ENCODE measurements at regions of chr15 and their contacts with region 1.

Region 1: DNA sequence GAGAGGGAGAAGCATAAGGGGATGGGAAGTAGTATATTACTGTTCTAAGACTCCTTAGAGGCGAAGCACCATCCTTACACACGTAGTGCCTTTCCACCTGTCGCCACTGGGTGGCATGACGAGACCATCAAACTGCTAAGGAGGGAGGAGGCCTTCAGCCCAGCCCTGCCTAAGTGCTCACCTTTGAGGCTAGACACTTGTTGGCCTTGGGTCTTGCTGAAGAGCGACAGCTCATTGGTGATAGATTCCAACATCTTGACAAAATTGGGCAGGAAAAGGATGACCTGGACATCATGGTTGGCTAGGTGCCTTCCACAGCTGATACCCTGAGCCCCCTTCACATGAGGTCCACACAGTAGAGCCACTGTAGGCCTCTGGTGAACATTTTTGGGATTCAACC is 19.6 kb downstream of the CLK3 start:
- DNase-seq: no peak

Region 2: DNA sequence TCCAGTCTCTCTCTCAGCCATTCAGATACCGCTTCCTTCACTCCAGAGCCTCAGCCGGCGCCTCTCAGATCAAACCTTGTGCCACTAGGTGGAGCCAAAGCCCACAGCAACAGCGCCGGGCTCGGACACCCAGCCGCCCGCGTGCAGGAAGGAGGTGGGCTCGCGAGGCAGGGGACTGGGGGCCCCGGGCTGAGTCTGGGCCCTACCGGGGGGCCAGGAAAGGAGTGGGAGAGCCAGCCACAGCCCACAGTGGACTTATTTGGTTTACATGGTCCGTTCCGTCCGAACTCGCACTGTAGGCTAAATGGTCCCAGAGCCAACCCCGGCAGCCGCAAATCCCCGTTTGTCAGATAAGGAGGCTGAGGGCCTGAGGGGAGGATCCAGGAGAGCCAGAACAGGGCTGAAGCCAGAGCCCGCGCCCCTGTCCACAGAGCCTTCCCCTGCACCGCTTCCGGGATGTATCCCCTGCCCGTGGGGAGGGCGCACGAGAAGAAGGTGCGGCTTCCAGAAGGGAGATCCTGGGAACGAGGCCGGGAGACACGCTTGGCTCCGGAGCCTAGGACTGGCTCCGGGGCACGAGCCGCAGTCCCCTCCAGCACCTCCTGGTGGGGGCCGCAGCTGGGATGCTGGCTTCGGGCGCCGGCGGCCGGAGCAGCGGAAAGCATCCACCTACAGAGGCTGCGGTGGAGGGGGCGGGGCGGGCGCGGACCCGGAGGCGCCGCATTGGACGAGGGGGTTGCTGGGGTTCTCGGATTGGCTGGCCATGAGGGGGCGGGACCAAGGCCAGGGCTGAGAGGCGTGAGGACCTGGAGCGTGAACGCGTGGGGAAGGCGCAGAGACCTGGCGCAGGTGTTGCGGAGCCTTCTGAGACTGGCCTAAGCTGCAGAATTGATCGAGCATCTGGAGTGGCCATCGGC is 261.2 kb before region 1 on chr15:
- intact Hi-C with region 1: loop called (anchors 2 kb)
- DNase-seq: peak; percentile 95

Region 3: GRCh38 chr15:74950078-74951000 is 315.1 kb after region 1 on chr15:
- intact Hi-C with region 1: loop called (anchors 5 kb)
- DNase-seq: no peak